Right ventricle myocardium superior (tissue), 1 donor: ENCODE measurements at regions of chr7 and their contacts with region 1.

Region 1: GRCh38 chr7:101138213-101138870 is 11.4 kb downstream of the SERPINE1 start:
- DNase-seq: peak; percentile 73
- ATAC-seq: peak; percentile 90

Region 2: DNA sequence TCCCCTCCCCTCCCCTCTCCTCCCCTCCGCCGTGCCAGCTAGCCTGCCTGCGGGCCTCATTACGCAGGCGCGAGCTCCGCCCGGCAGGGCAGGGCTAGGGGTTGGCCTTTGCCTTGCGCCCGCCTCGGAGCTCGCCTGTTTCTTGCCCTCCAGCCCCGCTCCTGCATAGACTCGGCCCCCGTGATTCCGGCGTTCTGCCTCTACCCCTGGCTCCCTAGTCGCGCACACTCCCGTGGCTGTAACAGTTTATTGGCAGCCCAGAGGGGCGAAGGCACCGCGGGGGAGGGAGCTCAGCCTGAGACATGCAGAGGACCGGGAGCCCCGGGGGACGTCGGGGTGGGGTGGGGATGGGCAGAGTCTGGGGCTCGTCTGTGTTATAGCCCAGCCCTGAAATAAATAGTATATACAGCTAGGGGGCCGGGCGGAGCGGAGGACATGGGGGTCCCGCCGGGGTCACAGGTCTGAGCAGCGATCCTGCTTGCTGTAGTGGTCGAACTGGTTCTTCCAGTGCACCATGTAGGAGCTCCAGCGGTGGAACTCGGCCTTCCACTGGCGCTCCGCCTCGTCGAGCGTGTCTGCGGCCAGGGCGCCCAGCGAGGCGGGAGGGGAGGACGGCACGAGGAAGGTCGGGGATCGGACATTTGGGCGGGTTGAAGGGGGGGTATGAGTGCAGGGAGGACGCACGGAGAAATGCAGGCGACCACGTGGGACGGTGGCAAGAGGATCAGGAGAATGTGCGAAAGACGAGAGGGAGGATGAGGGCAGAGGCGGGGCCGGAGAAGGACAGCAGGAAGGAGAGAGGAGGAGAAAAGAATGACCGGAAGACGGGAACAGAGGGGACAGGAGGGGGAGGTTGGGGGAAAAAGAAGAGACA is 248.3 kb before region 1 on chr7:
- intact Hi-C with region 1: loop called (anchors 10 kb)
- DNase-seq: peak; percentile 96
- ATAC-seq: peak; percentile 94

Region 3: GRCh38 chr7:101094416-101095375 is 43.6 kb before region 1 on chr7:
- intact Hi-C with region 1: loop called (anchors 2 kb)
- DNase-seq: peak; percentile 57
- ATAC-seq: peak; percentile 57

Region 4: DNA sequence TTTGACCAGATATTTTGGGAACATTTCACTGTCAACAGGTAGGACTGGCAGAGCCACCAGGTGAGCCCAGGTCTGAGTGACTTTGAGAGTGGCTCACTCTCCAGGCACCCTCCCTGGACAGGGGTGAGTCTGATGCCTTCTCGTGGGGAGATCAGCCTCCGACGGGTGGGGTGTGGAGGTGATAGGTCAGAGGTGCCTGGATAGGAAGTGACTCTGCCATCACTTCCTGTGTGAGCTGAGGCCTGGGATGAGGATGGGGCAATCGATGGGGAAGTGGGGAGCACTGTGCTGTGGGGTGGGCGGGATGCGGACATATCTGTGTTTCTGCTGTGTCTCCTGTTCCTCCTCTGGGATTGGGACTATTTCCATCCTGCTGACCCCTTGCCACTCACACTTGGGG is 148.7 kb after region 1 on chr7:
- intact Hi-C with region 1: loop called (anchors 5 kb)
- DNase-seq: no peak
- ATAC-seq: no peak